ENCODE measurements at regions of chr15 and their contacts with region 1.

Region 1: GRCh38 chr15:41811432-41812195 is 16.3 kb upstream of the JMJD7 start:
- DNase-seq: peak; percentile 87 to 88
- H3K4me3 ChIP-seq: no peak overlapping the region
- H3K27ac ChIP-seq: no peak overlapping the region
- H3K4me1 ChIP-seq: no peaks in the 10 kb centered on the region
- H3K27me3 ChIP-seq: no peaks in the 10 kb centered on the region
- CTCF ChIP-seq: peak; percentile 87 to 93 (median 90)
- POLR2A ChIP-seq: no peak

Region 2: GRCh38 chr15:41607032-41607431 is 204.6 kb before region 1 on chr15:
- intact Hi-C with region 1: loop called (anchors 5 kb)
- DNase-seq: no peak
- H3K4me3 ChIP-seq: no peak overlapping the region
- H3K27ac ChIP-seq: no peak overlapping the region
- H3K4me1 ChIP-seq: peaks cover 0 to 7% of the 10 kb centered on the region in 2 donors
- H3K27me3 ChIP-seq: no peaks in the 10 kb centered on the region
- CTCF ChIP-seq: no peak
- POLR2A ChIP-seq: no peak

Region 3: GRCh38 chr15:41634072-41634626 is 177.5 kb before region 1 on chr15:
- intact Hi-C with region 1: no loop called
- DNase-seq: no peak
- H3K4me3 ChIP-seq: no peak overlapping the region
- H3K27ac ChIP-seq: no peak overlapping the region
- H3K4me1 ChIP-seq: no peaks in the 10 kb centered on the region
- H3K27me3 ChIP-seq: no peaks in the 10 kb centered on the region
- CTCF ChIP-seq: no peak
- POLR2A ChIP-seq: no peak

Region 4: DNA sequence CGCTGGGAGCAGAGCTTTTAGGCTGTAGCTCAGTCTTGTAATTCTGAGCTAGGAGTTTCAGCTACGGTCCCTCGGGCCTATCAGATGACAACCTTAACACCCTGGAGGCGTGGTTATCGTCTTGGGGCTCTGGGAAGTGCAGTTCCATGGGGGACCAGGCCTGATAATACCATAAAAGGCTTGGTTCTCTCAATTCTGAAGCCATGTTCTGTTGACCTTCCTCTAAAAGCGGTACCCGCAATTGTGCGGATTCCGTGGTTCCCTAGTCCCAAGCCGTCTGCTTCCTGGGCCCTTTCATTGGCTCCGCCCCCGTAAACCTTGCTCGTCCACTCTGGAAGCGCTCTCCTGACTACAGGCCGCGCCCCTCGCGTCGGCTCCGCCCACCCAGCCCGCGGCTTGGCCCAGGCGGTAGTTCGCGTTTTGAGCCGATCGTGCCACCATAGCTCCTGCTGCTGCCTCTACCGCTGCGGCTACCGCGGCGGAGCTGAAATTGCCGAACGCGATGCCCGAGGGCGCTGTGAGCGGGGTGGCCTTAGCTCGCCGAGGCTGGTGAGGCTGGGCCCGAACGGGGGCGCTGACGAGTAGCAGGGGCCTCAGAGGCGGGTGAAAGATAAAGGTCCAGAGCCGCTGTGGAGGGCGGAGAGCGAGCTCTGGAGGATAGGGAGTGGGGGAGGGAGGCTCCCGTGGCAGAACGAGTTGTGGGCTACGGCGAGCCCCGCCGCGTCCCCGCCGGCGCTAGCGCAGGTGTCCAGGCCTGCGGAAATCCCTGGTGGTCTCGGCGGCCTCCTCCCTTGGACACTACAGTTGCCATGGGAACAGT is 37.3 kb before region 1 on chr15 and contains the start of gene MAPKBP1:
- intact Hi-C with region 1: loop called (anchors 5 kb)
- DNase-seq: peak; percentile 95 to 98
- H3K4me3 ChIP-seq: peak within 1 kb of the TSS; percentile 55 to 71
- H3K27ac ChIP-seq: peak within 1 kb of the TSS; percentile 87
- H3K4me1 ChIP-seq: peaks cover 6% of the 10 kb centered on the region in 2 donors
- H3K27me3 ChIP-seq: no peaks in the 10 kb centered on the region
- CTCF ChIP-seq: peak; percentile 51 to 78 (median 73)
- POLR2A ChIP-seq: peak; percentile 72 to 77
- total RNA-seq, gene MAPKBP1: 5.9 to 56.2 (median 23.5) TPM

Region 5: DNA sequence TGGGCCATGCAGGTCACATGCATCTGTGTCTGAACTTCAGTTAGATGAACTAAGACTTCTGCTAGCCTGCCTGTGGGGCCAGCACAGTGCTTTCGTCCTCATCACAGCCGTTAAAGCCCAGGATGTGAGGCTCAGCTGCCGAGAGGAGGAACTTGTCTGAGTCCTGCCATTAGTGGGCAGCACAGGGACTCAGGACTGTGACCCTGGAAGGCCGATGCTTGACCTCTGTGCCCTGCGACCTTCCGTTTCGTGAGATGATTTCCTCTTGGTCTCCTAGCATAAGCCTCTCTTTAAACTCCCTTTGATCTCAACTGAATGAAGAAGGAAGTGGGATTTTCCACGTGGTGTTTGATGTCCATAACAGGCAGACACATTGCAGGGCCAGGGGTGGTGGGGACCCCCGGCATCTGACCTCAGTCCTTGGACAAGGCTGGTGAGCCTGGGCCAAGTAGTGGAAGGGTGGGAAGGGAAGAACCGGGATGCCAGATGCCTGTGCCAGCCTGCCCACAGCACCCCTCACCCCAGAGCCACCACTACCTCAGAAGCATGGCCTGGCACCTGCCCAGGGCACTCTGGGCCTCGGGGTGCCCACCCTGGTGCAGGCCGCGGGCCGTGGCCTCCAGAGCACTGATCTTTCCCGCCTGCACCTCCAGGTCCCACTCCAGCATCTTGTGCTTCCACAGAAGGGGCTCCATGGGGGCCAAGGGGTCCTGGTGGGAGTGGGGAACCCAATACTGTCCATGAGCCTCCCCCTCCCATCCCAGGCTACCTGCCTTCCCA is 48.6 kb after region 1 on chr15:
- intact Hi-C with region 1: no loop called
- DNase-seq: peak in 1 of 2 donors; percentile 34
- H3K4me3 ChIP-seq: no peak overlapping the region
- H3K27ac ChIP-seq: no peak overlapping the region
- H3K4me1 ChIP-seq: no peaks in the 10 kb centered on the region
- H3K27me3 ChIP-seq: no peaks in the 10 kb centered on the region
- CTCF ChIP-seq: peak in 1 of 4 experiments; percentile 37
- POLR2A ChIP-seq: no peak

Region 6: DNA sequence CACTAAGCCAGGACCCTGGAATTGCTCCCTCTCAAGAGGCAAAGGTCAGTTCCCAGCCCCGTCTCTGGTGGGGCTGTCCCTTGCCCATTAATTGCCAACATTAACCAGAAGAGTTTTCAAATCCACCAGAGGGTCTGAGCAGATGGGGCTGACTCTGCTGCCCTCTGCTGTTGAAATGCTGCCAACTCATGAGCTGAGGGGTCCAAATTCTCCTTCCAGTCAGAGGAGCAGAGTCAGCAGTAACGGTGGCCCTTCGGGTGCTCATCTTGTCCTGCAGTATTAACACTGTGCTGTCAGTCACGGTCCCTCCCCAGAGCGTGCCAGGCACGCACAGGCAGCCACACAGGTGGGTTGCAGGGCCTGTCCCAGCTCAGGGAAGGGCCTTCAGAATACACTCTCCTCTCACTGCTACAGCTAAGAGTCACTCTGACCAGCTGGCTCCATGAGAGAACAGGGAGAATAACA is 93.0 kb after region 1 on chr15:
- intact Hi-C with region 1: no loop called
- DNase-seq: peak; percentile 58 to 64
- H3K4me3 ChIP-seq: no peak overlapping the region
- H3K27ac ChIP-seq: no peak overlapping the region
- H3K4me1 ChIP-seq: no peaks in the 10 kb centered on the region
- H3K27me3 ChIP-seq: no peaks in the 10 kb centered on the region
- CTCF ChIP-seq: peak; percentile 49 to 78 (median 74)
- POLR2A ChIP-seq: no peak